Sciatic nerve (tissue), 2 donors: ENCODE measurements at regions of chr10 and their contacts with region 1.

Region 1: GRCh38 chr10:126302826-126303665 is 85.2 kb downstream of the ADAM12 start:
- DNase-seq: no peak
- ATAC-seq: peak; percentile 71

Region 2: DNA sequence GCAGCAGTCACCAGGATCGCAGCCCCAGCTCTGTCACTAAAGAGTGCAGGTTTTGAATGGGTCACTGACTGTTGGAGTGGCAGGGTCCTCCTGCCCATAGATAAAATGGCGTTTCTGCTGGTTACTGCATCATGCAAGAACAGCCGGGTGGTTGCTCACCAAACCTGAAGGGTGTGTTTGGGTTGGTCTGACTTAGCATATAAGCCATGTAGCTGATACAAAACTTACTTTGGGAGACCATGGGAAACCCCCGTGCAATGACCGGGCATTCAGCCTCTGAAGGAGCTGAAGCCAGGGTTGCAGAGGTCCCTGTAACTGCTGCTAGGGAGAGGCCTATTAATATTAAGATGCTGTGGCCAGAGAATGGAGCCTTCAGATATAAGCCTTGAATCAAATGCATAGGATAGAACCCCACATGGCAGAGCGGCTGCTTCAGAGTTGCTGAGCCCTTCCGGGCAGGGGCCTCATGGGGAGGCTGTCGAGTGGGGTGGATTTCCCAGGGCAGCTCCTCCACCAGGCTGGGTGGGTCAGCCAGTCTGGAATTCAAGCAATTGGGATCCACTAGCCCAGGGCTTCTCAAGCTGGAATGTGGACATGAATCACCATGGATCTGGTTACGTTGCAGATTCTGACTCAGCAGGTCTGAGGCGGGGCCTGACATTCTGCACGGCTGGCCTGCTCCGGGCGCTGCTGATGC is 1071.8 kb before region 1 on chr10:
- intact Hi-C with region 1: no loop called
- DNase-seq: no peak
- ATAC-seq: peak; percentile 24

Region 3: GRCh38 chr10:125982260-125982948 is 320.6 kb before region 1 on chr10:
- intact Hi-C with region 1: loop called (anchors 10 kb)
- DNase-seq: no peak
- ATAC-seq: peak; percentile 68